ENCODE measurements at regions of chr4 and their contacts with region 1.

Region 1: GRCh38 chr4:48906206-48907173 is at the start of gene OCIAD2:
- DNase-seq: peak; percentile 71
- H3K4me3 Mint-ChIP-seq: peak within 1 kb of the TSS; percentile 100
- H3K27ac Mint-ChIP-seq: peak within 1 kb of the TSS; percentile 96
- H3K4me1 Mint-ChIP-seq: peaks cover 53% of the 10 kb centered on the region
- H3K27me3 Mint-ChIP-seq: no peaks in the 10 kb centered on the region
- total RNA-seq, gene OCIAD2: 59.6 and 62.5 TPM in 2 replicates

Region 2: DNA sequence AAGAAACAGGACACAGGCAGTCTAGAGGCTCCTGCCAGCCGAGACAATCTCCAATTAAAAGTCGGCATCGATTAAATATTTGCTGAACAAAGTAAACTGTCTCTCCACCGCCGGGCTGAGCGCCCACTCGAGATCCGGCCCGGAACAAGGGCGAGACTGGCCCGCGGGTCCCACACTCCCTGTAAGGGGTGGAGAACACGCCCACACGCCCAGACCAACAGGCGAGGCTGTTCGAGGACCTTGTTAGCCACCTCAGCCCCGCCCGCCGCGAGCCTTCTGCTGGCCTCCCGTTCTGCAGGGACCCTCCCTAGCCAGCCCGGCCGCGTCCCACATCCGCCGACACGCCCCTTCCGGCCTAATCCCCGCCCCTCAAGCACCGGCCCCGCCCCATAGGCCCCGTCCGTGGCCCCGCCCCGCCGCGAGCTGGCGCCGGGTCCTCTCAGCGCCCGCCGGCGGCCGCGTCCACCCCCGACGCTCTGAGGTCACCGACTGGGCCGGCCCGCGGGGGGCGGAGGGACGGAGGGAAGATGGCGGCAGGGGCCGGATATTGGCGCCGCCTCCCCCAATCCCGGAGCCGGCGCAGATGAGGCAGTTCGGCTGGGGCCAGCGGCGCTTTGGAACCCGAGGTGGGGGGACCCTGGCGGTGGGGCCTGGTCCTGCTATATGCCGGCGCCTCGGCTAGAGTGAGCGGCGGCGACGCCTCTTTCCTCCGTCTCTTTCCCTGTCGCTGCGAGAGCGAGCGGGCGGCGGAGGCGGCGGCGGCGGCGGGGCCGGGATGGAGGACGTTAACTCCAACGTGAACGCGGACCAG is 565.3 kb before region 1 on chr4 and contains the start of gene SLAIN2:
- intact Hi-C with region 1: loop called (anchors 2 kb)
- DNase-seq: peak; percentile 98
- H3K4me3 Mint-ChIP-seq: peak within 1 kb of the TSS; percentile 98
- H3K27ac Mint-ChIP-seq: peak within 1 kb of the TSS; percentile 98
- H3K4me1 Mint-ChIP-seq: peaks cover 74% of the 10 kb centered on the region
- H3K27me3 Mint-ChIP-seq: no peaks in the 10 kb centered on the region
- total RNA-seq, gene SLAIN2: 71.4 and 79.4 TPM in 2 replicates

Region 3: GRCh38 chr4:48578132-48578968 is 328.1 kb before region 1 on chr4:
- intact Hi-C with region 1: loop called (anchors 1 kb)
- DNase-seq: peak; percentile 17
- H3K4me3 Mint-ChIP-seq: no peak overlapping the region
- H3K27ac Mint-ChIP-seq: peak overlapping the region; percentile 6
- H3K4me1 Mint-ChIP-seq: peaks cover 10% of the 10 kb centered on the region
- H3K27me3 Mint-ChIP-seq: no peaks in the 10 kb centered on the region

Region 4: GRCh38 chr4:48681856-48682255 is 224.6 kb before region 1 on chr4:
- intact Hi-C with region 1: loop called (anchors 5 kb)
- DNase-seq: no peak
- H3K4me3 Mint-ChIP-seq: no peak overlapping the region
- H3K27ac Mint-ChIP-seq: peak overlapping the region; percentile 66
- H3K4me1 Mint-ChIP-seq: peaks cover 36% of the 10 kb centered on the region
- H3K27me3 Mint-ChIP-seq: no peaks in the 10 kb centered on the region

Region 5: DNA sequence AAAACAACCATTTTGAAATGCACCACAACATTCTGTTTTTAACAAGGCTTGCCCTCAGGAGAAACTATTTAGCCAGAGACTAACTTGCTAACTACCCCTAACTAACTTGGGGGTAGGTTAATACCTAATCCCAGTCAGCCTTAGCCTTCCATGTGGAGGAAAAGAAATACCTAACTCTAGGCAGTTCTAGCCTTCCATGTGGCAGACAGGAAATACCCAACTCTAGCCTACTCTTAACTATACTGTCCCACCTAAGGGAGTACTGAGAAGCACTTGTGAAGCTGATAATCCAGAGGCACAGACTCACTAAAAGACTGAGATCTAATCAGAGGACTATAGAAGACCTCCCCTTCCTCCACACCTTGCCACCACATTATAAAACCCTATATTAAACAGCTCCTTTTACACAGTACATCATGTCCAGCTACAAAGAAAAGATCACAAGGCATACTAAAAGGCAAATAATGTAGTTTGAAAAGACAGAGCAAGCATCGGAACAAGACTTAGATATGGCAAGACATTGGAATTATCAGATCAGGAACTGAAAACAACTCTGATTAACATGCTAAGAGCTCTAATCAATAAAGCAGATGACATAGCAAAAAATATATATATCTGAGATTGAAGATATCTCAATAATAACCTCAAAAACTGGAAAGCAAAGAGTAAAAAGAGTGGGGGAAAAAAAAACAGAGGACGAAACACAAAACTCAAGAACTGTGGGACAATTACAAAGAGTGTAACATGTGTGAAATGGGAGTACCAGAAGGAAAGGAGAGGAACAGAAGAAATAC is 178.6 kb before region 1 on chr4:
- intact Hi-C with region 1: loop called (anchors 5 kb)
- DNase-seq: no peak
- H3K4me3 Mint-ChIP-seq: no peak overlapping the region
- H3K27ac Mint-ChIP-seq: peak overlapping the region; percentile 47
- H3K4me1 Mint-ChIP-seq: peaks cover 88% of the 10 kb centered on the region
- H3K27me3 Mint-ChIP-seq: no peaks in the 10 kb centered on the region

Region 6: DNA sequence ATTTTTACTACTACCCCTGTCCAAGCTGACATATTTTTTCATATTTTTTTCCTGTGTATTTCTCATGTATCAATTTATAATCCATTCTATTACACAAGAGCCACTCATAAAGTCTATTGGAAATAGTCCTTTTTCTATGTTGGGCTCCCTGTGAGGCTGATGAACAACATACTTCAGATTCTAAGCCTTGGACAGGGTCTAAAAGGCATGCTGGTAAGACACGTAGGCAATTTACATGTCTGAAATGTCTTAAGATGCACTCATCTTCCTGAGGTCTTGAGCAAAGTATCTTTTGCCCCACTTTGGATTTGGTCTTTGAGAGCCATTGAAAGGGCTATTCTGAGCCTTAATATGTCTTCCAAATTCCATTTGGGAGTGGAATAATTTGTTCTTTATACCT is 43.8 kb before region 1 on chr4:
- intact Hi-C with region 1: no loop called
- DNase-seq: no peak
- H3K4me3 Mint-ChIP-seq: no peak overlapping the region
- H3K27ac Mint-ChIP-seq: no peak overlapping the region
- H3K4me1 Mint-ChIP-seq: no peaks in the 10 kb centered on the region
- H3K27me3 Mint-ChIP-seq: no peaks in the 10 kb centered on the region

Region 7: DNA sequence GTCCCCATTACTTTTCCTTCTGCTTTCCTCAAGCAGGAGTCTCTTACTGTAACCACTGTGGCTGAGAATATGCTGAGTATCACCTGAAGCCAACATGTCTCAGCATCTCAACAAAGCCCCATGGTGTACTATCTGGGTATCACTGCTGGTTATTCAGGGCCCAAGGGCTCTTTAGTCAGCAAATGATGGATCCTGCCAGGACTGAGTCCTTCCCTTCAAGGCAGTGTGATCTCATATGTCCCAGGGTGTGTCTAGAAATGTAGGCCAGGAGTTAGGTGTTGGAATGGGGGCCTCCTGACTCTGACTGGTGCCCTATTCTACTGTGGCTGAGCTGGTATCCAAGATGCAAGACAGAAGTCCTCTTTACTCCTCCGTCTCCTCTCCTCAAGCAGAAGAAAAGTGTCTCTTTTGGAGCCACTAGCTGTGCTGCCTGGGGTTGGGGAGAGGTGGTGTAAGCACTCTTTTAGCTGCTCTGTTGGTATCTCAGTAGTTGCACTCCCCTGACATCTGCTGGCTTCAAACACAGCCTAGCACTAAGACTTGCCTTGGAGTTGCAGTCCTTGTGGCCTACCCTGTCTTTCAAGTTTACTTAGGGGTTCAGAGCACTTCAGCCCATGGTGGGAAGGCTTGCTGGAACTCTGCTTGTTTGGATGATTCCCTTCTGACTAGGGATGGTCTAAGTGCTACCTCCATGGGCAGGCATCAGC is 28.5 kb before region 1 on chr4:
- intact Hi-C with region 1: no loop called
- DNase-seq: no peak
- H3K4me3 Mint-ChIP-seq: no peak overlapping the region
- H3K27ac Mint-ChIP-seq: no peak overlapping the region
- H3K4me1 Mint-ChIP-seq: no peaks in the 10 kb centered on the region
- H3K27me3 Mint-ChIP-seq: peaks cover 1% of the 10 kb centered on the region

Region 8: DNA sequence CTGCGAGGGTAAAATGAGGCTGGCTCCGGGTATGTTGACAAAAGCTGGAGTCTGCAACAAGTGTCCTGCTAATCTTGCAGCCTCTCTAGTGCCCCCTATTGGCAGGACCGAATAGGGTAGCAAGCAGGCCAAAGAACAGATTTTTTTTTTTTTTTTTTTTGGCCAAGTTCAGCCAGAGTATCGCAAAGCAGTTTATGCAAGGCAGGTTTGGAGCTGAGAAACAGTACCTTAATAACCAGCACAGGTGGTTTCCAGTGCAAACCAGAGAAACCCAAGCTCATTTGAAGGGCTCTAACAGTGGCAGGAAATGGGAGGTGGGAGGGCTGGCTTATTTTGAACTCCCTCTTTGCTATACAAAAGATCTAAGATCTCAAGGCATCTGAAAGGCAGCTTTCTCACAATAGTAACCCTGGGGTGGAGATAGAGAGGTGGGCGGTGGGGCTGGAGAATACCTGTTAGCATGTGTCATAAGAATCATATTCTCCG is 38.3 kb after region 1 on chr4:
- intact Hi-C with region 1: loop called (anchors 5 kb)
- DNase-seq: peak; percentile 31
- H3K4me3 Mint-ChIP-seq: no peak overlapping the region
- H3K27ac Mint-ChIP-seq: no peak overlapping the region
- H3K4me1 Mint-ChIP-seq: peaks cover 11% of the 10 kb centered on the region
- H3K27me3 Mint-ChIP-seq: peaks cover 5% of the 10 kb centered on the region

Region 9: GRCh38 chr4:48963042-48963679 is 56.7 kb after region 1 on chr4:
- intact Hi-C with region 1: loop called (anchors 5 kb)
- DNase-seq: peak; percentile 54
- H3K4me3 Mint-ChIP-seq: no peak overlapping the region
- H3K27ac Mint-ChIP-seq: no peak overlapping the region
- H3K4me1 Mint-ChIP-seq: no peaks in the 10 kb centered on the region
- H3K27me3 Mint-ChIP-seq: peaks cover 4% of the 10 kb centered on the region